CD4-positive, alpha-beta T cell (primary cell): ENCODE measurements at regions of chr2 and their contacts with region 1.

Region 1: GRCh38 chr2:181742922-181743722 is 62.8 kb upstream of the NEUROD1 start:
- DNase-seq: peak in 6 of 14 experiments; percentile 2 to 61 (median 40)
- ATAC-seq: no peak
- H3K4me3 ChIP-seq: no peak overlapping the region
- H3K4me3 Mint-ChIP-seq: no peak overlapping the region
- H3K27ac ChIP-seq: no peak overlapping the region
- H3K27ac Mint-ChIP-seq: no peak overlapping the region
- H3K4me1 ChIP-seq: no peaks in the 10 kb centered on the region
- H3K4me1 Mint-ChIP-seq: no peaks in the 10 kb centered on the region
- H3K27me3 ChIP-seq: no peaks in the 10 kb centered on the region
- H3K27me3 Mint-ChIP-seq: no peaks in the 10 kb centered on the region
- CTCF ChIP-seq: peak; percentile 72

Region 2: GRCh38 chr2:181904022-181904632 is 161.0 kb after region 1 on chr2:
- CTCF ChIA-PET with region 1: no interaction called
- POLR2A ChIA-PET with region 1: no interaction called
- intact Hi-C with region 1: loop called (anchors 1 to 5 kb)
- DNase-seq: peak in 3 of 14 experiments; percentile 48 to 59 (median 58)
- ATAC-seq: no peak
- H3K4me3 ChIP-seq: no peak overlapping the region
- H3K4me3 Mint-ChIP-seq: no peak overlapping the region
- H3K27ac ChIP-seq: no peak overlapping the region
- H3K27ac Mint-ChIP-seq: no peak overlapping the region
- H3K4me1 ChIP-seq: no peaks in the 10 kb centered on the region
- H3K4me1 Mint-ChIP-seq: peaks cover 23% of the 10 kb centered on the region
- H3K27me3 ChIP-seq: no peaks in the 10 kb centered on the region
- H3K27me3 Mint-ChIP-seq: no peaks in the 10 kb centered on the region
- CTCF ChIP-seq: peak; percentile 64

Region 3: GRCh38 chr2:181953881-181954537 is 210.9 kb after region 1 on chr2:
- CTCF ChIA-PET with region 1: no interaction called
- POLR2A ChIA-PET with region 1: interaction called, 5 read pairs
- intact Hi-C with region 1: loop called in 1 of 2 experiments (anchors 2 kb)
- DNase-seq: peak; percentile 26 to 80 (median 48)
- ATAC-seq: peak; percentile 77
- H3K4me3 ChIP-seq: peak overlapping the region; percentile 5
- H3K4me3 Mint-ChIP-seq: peak overlapping the region; percentile 44
- H3K27ac ChIP-seq: no peak overlapping the region
- H3K27ac Mint-ChIP-seq: no peak overlapping the region
- H3K4me1 ChIP-seq: peaks cover 5% of the 10 kb centered on the region
- H3K4me1 Mint-ChIP-seq: peaks cover 14% of the 10 kb centered on the region
- H3K27me3 ChIP-seq: no peaks in the 10 kb centered on the region
- H3K27me3 Mint-ChIP-seq: peaks cover 14% of the 10 kb centered on the region
- CTCF ChIP-seq: peak; percentile 47

Region 4: GRCh38 chr2:182650704-182651103 is 907.6 kb after region 1 on chr2:
- CTCF ChIA-PET with region 1: no interaction called
- POLR2A ChIA-PET with region 1: no interaction called
- intact Hi-C with region 1: loop called in 1 of 2 experiments (anchors 5 kb)
- DNase-seq: peak in 3 of 14 experiments; percentile 5 to 15 (median 14)
- ATAC-seq: no peak
- H3K4me3 ChIP-seq: no peak overlapping the region
- H3K4me3 Mint-ChIP-seq: no peak overlapping the region
- H3K27ac ChIP-seq: no peak overlapping the region
- H3K27ac Mint-ChIP-seq: no peak overlapping the region
- H3K4me1 ChIP-seq: no peaks in the 10 kb centered on the region
- H3K4me1 Mint-ChIP-seq: peaks cover 9% of the 10 kb centered on the region
- H3K27me3 ChIP-seq: peaks cover 0 to 4% of the 10 kb centered on the region in 2 experiments
- H3K27me3 Mint-ChIP-seq: peaks cover 4% of the 10 kb centered on the region
- CTCF ChIP-seq: peak; percentile 36